Activated CD4-positive, alpha-beta memory T cell treated with anti-CD3 and anti-CD28 coated beads, Interleukin-2, amount 10 ng/mL, durations not matched to agents 7 days and 5 days (primary cell): ENCODE measurements at regions of chr10 and their contacts with region 1.

Region 1: DNA sequence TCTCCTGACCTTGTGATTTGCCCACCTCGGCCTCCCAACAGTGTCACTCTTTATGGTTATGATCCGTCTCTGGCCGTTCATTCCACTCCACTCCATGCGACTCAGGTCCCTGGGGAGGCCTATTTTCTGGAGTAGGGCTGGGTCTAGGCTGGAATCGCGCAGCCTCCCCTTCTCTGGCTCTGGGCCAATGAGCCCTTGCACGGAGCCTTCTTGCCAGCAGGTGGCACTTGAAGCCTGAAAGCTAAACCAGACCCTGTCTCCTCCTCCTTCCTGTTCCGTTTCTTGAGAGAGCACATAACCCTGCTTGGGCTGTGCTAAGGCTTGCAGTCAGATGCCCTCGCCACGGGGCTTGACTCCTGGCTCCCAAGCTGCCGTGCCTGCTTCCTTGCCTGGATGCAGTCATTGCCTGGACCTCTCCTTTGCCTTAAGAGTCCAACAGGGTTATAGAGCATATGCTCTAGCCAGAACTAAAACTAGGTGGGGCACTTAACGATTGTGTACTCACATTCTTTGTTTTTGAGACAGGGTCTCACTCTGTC is 9.6 kb upstream of the DNAJB12 start:
- DNase-seq: peak; percentile 88
- H3K4me3 Mint-ChIP-seq: no peak overlapping the region
- H3K27ac Mint-ChIP-seq: no peak overlapping the region
- H3K4me1 Mint-ChIP-seq: peaks cover 19% of the 10 kb centered on the region
- H3K27me3 Mint-ChIP-seq: peaks cover 3% of the 10 kb centered on the region

Region 2: GRCh38 chr10:72386916-72387586 is 22.7 kb after region 1 on chr10:
- CTCF ChIA-PET with region 1: no interaction called
- POLR2A ChIA-PET with region 1: no interaction called
- DNase-seq: no peak
- H3K4me3 Mint-ChIP-seq: no peak overlapping the region
- H3K27ac Mint-ChIP-seq: no peak overlapping the region
- H3K4me1 Mint-ChIP-seq: no peaks in the 10 kb centered on the region
- H3K27me3 Mint-ChIP-seq: no peaks in the 10 kb centered on the region

Region 3: GRCh38 chr10:72597897-72598296 is 233.6 kb after region 1 on chr10:
- CTCF ChIA-PET with region 1: no interaction called
- POLR2A ChIA-PET with region 1: no interaction called
- DNase-seq: no peak
- H3K4me3 Mint-ChIP-seq: no peak overlapping the region
- H3K27ac Mint-ChIP-seq: no peak overlapping the region
- H3K4me1 Mint-ChIP-seq: peaks cover 1% of the 10 kb centered on the region
- H3K27me3 Mint-ChIP-seq: no peaks in the 10 kb centered on the region

Region 4: GRCh38 chr10:72834183-72834825 is 470.0 kb after region 1 on chr10:
- CTCF ChIA-PET with region 1: interaction called, 35 read pairs
- POLR2A ChIA-PET with region 1: interaction called, 14 read pairs
- DNase-seq: peak; percentile 48
- H3K4me3 Mint-ChIP-seq: no peak overlapping the region
- H3K27ac Mint-ChIP-seq: no peak overlapping the region
- H3K4me1 Mint-ChIP-seq: no peaks in the 10 kb centered on the region
- H3K27me3 Mint-ChIP-seq: no peaks in the 10 kb centered on the region